Activated B cell treated with CpG ODN at 0.5 μM for 24 hours (primary cell): ENCODE measurements at regions of chr7 and their contacts with region 1.

Region 1: DNA sequence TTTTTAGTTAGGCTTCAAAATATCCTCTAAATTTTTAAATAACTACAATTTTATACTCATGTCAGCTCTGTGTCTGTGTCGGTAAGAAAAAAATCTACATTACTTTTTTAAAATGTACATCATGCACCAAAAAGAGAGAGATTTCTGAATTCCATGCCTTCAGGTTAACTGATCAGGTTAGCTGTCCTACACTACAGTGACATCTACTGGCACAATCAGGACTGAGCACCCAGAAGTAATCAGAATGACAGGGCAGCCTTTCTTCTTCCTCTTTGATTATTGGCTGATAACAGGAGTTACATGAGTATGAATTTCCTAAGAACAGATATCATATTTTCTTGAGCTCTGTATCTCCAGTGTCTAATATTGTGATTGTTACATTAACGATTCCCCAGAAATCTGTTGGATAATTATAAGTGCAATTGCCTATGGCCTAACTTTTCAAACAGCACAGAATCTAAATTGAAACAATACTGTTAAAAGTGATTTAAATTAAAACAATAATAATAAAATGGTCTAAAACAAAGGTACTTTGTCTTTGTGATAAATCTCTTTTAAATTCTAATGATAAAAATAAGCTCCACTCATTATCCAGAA is 41.8 kb upstream of the HYCC1 start:
- DNase-seq: no peak
- ATAC-seq: peak; percentile 99
- H3K4me3 Mint-ChIP-seq: no peak overlapping the region
- H3K27ac Mint-ChIP-seq: no peak overlapping the region
- H3K4me1 Mint-ChIP-seq: no peaks in the 10 kb centered on the region
- H3K27me3 Mint-ChIP-seq: no peaks in the 10 kb centered on the region
- CTCF ChIP-seq: peak; percentile 80

Region 2: GRCh38 chr7:21086688-21087087 is 1969.0 kb before region 1 on chr7:
- CTCF ChIA-PET with region 1: no interaction called
- POLR2A ChIA-PET with region 1: no interaction called
- intact Hi-C with region 1: no loop called
- DNase-seq: no peak
- ATAC-seq: no peak
- H3K4me3 Mint-ChIP-seq: no peak overlapping the region
- H3K27ac Mint-ChIP-seq: no peak overlapping the region
- H3K4me1 Mint-ChIP-seq: no peaks in the 10 kb centered on the region
- H3K27me3 Mint-ChIP-seq: peaks cover 2% of the 10 kb centered on the region
- CTCF ChIP-seq: no peak

Region 3: GRCh38 chr7:22110227-22110839 is 945.3 kb before region 1 on chr7:
- CTCF ChIA-PET with region 1: no interaction called
- POLR2A ChIA-PET with region 1: no interaction called
- intact Hi-C with region 1: loop called (anchors 2 kb)
- DNase-seq: no peak
- ATAC-seq: peak; percentile 84
- H3K4me3 Mint-ChIP-seq: no peak overlapping the region
- H3K27ac Mint-ChIP-seq: no peak overlapping the region
- H3K4me1 Mint-ChIP-seq: no peaks in the 10 kb centered on the region
- H3K27me3 Mint-ChIP-seq: no peaks in the 10 kb centered on the region
- CTCF ChIP-seq: peak; percentile 59

Region 4: DNA sequence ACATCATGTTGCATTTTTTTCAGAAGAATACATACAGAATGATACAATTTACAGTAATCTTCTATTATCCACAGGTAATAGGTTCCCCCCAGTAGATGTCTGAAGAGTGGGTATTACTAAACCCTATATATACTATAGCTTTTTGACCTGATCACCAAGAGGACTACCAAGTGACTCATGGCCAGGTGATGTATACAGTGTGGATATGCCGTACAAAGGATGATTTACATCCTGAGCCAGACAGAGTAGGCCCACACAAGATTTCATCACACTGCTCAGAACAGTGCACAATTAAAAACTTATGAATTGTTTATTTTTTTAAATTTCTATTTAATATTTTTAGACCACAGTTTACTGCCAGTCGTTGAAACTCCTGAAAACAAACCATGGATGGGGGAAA is 626.3 kb before region 1 on chr7:
- CTCF ChIA-PET with region 1: no interaction called
- POLR2A ChIA-PET with region 1: no interaction called
- intact Hi-C with region 1: no loop called
- DNase-seq: no peak
- ATAC-seq: no peak
- H3K4me3 Mint-ChIP-seq: no peak overlapping the region
- H3K27ac Mint-ChIP-seq: no peak overlapping the region
- H3K4me1 Mint-ChIP-seq: peaks cover 26% of the 10 kb centered on the region
- H3K27me3 Mint-ChIP-seq: no peaks in the 10 kb centered on the region
- CTCF ChIP-seq: no peak

Region 5: GRCh38 chr7:22732556-22733126 is 323.0 kb before region 1 on chr7:
- CTCF ChIA-PET with region 1: interaction called, 29 read pairs
- POLR2A ChIA-PET with region 1: no interaction called
- intact Hi-C with region 1: loop called (anchors 1 kb)
- DNase-seq: no peak
- ATAC-seq: peak; percentile 61
- H3K4me3 Mint-ChIP-seq: no peak overlapping the region
- H3K27ac Mint-ChIP-seq: no peak overlapping the region
- H3K4me1 Mint-ChIP-seq: peaks cover 40% of the 10 kb centered on the region
- H3K27me3 Mint-ChIP-seq: no peaks in the 10 kb centered on the region
- CTCF ChIP-seq: no peak

Region 6: DNA sequence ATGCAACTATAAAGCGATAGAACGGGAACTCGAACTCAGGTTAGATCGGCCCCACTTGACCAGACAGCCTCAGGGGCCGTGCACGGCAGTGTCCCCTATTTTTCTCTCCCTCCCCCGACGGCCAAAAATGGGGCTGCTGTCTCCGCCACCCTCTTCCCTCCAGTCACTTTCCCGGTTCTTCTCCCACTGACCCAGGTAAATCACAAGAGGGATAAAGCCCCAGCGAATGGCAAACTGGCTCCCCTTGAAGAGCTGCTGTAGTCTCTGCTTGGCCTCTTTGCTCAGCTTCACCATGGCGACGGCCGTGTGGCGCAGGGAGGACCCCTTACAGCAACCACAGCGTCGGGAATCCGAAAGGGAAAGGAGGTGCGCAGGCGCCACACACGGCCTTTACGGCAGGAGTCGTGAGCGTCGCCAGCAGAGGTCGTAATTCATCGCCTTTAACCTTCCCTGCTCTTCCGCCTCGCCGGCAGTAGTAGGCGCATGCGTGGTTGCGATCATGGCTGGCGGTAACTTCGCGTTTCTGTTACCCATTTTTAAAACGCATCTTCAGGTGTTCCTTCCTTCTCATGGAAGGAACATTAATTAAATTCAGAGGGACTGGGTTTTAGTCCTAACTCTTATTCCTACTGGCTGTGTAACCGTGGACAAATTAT is 233.1 kb before region 1 on chr7 and contains the start of gene TOMM7:
- CTCF ChIA-PET with region 1: interaction called, 9 read pairs
- POLR2A ChIA-PET with region 1: no interaction called
- intact Hi-C with region 1: loop called (anchors 1 kb)
- DNase-seq: peak; percentile 66
- ATAC-seq: peak; percentile 99
- H3K4me3 Mint-ChIP-seq: peak within 1 kb of the TSS; percentile 99
- H3K27ac Mint-ChIP-seq: peak within 1 kb of the TSS; percentile 91
- H3K4me1 Mint-ChIP-seq: peaks cover 39% of the 10 kb centered on the region
- H3K27me3 Mint-ChIP-seq: peaks cover 11% of the 10 kb centered on the region
- CTCF ChIP-seq: no peak
- total RNA-seq, gene TOMM7: 324 and 406 TPM in 2 replicates

Region 7: GRCh38 chr7:22979861-22980260 is 75.8 kb before region 1 on chr7:
- CTCF ChIA-PET with region 1: interaction called, 5 read pairs
- POLR2A ChIA-PET with region 1: no interaction called
- intact Hi-C with region 1: loop called (anchors 5 kb)
- DNase-seq: no peak
- ATAC-seq: no peak
- H3K4me3 Mint-ChIP-seq: no peak overlapping the region
- H3K27ac Mint-ChIP-seq: no peak overlapping the region
- H3K4me1 Mint-ChIP-seq: no peaks in the 10 kb centered on the region
- H3K27me3 Mint-ChIP-seq: no peaks in the 10 kb centered on the region
- CTCF ChIP-seq: no peak

Region 8: DNA sequence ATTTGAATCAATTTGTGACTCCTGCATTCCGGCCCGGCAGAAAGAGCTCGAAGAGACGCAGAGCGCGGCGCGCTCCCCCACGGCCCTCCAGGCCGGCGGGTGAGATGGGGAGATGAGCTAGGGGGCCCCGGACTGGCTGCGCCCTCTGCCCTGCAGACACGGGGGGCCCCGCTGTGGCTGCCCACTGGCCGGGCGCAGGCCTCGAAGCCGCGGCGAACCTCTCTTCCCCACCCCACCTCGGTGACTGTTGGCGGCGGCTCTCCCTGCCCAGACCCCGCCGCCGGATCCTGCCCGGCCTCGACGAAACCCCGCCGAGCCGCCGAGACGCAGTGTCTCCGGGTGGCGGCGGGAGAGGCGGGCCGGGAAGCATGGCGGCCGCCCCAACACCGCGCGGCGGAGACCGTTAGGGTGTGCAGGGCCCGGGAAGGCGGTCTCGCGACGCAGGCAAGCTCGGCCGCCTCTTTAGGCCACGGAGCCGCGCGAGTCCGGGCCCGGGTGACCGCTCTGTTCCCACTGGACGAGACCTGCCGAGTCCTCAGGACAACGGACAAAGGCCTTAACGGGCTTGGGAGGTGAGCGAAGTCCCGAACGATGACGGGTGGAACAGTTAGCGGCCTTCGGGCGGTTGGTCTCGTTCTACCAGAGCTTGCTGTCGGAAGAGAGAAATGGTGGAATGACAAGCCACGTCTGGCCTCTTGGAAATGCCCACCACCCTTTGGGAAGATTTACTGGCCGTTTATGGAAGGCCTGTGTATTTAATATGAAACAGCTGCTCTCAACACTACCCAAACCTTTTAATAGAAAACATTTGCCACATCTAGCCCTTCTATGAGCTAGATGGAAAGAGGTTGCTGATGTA is 150.5 kb after region 1 on chr7:
- CTCF ChIA-PET with region 1: no interaction called
- POLR2A ChIA-PET with region 1: no interaction called
- intact Hi-C with region 1: no loop called
- DNase-seq: no peak
- ATAC-seq: peak; percentile 14
- H3K4me3 Mint-ChIP-seq: peak overlapping the region; percentile 20
- H3K27ac Mint-ChIP-seq: no peak overlapping the region
- H3K4me1 Mint-ChIP-seq: peaks cover 5% of the 10 kb centered on the region
- H3K27me3 Mint-ChIP-seq: peaks cover 20% of the 10 kb centered on the region
- CTCF ChIP-seq: no peak